Activated CD8-positive, alpha-beta T cell treated with anti-CD3 and anti-CD28 coated beads, Interleukin-2, amount 10 ng/mL, durations not matched to agents 7 days and 5 days (primary cell): ENCODE measurements at regions of chr9 and their contacts with region 1.

Region 1: GRCh38 chr9:126965541-126966428 is 51.2 kb downstream of the RALGPS1 start:
- DNase-seq: peak; percentile 65
- ATAC-seq: peak; percentile 67
- H3K4me3 Mint-ChIP-seq: no peak overlapping the region
- H3K27ac Mint-ChIP-seq: no peak overlapping the region
- H3K4me1 Mint-ChIP-seq: peaks cover 4% of the 10 kb centered on the region
- H3K27me3 Mint-ChIP-seq: peaks cover 11% of the 10 kb centered on the region

Region 2: DNA sequence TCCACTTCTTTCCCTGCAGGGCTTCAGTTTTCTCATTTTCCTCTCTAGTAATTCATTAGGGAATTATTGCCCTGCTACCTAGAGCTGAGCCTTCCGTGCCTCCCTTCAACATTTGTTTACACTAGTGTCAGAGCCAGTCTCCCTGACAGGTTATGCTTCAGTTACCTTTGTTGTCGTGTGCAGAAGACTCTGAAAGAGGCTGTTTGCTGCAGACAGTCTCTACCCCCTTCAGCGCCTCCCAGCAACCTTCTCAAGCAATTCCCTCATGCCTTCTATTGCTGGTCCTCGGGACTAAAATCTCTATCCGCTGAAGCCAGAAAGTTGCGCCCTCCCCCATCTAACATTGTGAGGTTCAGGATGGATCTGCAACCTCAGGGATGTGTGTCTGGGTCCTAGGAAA is 38.4 kb before region 1 on chr9:
- CTCF ChIA-PET with region 1: no interaction called
- POLR2A ChIA-PET with region 1: no interaction called
- DNase-seq: no peak
- ATAC-seq: no peak
- H3K4me3 Mint-ChIP-seq: no peak overlapping the region
- H3K27ac Mint-ChIP-seq: no peak overlapping the region
- H3K4me1 Mint-ChIP-seq: no peaks in the 10 kb centered on the region
- H3K27me3 Mint-ChIP-seq: peaks cover 7% of the 10 kb centered on the region

Region 3: GRCh38 chr9:126999315-127000068 is 33.7 kb after region 1 on chr9:
- CTCF ChIA-PET with region 1: no interaction called
- POLR2A ChIA-PET with region 1: no interaction called
- DNase-seq: no peak
- ATAC-seq: no peak
- H3K4me3 Mint-ChIP-seq: no peak overlapping the region
- H3K27ac Mint-ChIP-seq: no peak overlapping the region
- H3K4me1 Mint-ChIP-seq: peaks cover 6% of the 10 kb centered on the region
- H3K27me3 Mint-ChIP-seq: peaks cover 17% of the 10 kb centered on the region

Region 4: GRCh38 chr9:127199001-127199791 is 233.4 kb after region 1 on chr9:
- CTCF ChIA-PET with region 1: interaction called, 14 read pairs
- POLR2A ChIA-PET with region 1: no interaction called
- DNase-seq: peak; percentile 84
- ATAC-seq: peak; percentile 77
- H3K4me3 Mint-ChIP-seq: no peak overlapping the region
- H3K27ac Mint-ChIP-seq: no peak overlapping the region
- H3K4me1 Mint-ChIP-seq: peaks cover 7% of the 10 kb centered on the region
- H3K27me3 Mint-ChIP-seq: peaks cover 2% of the 10 kb centered on the region